ENCODE measurements at regions of chr11 and their contacts with region 1.

Region 1: DNA sequence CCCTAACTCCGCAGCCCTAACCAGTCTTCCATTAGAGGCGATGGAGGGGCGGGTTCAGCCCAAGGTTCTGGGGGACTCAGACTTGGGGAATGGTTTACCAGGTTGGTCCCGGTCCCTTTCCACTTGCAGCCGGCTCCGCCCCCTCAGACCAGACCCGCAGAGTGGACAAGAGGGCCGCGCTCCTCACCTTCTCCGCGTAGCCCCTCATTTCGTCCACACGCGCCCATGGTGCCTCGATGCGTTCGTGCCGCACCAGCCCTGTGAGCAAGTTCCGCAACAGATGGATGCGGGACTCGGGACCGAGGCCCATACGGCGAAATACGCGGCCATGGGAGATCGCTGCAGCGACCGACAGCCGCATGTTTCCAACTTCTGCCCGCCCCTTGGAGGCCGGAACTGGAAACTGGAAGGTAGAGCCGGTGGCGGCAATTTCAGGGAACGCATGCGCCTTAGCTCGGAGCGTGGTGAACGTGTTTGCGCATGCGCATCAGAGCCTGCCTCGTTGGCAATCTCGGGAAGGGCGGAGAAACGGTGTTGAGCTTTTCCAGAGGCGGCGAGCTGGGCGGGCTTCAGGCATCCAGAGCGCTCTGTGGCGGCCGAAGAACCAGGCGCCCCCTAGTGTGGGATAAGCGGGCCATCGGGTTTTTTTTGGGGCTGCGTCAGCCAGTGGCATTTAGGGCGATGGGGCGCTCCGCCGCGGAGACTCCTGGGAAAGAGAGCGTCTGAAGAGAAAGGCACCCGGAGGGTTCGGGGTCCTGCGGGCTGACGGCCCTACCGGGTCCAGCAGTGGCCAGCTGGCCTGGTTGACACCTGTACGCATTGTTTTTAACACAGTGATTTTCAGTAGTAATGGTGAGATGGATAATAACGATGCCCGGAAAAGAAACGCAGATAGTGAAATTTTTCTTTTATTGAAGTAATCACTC is at the start of gene MRPL17:
- DNase-seq: peak; percentile 98
- ATAC-seq: peak; percentile 94
- H3K4me3 ChIP-seq: peak within 1 kb of the TSS; percentile 63 to 81 (median 66)
- H3K27ac ChIP-seq: peak within 1 kb of the TSS; percentile 77
- H3K4me1 ChIP-seq: peaks cover 18% of the 10 kb centered on the region
- H3K27me3 ChIP-seq: peaks cover 0 to 9% of the 10 kb centered on the region in 2 experiments; a peak in 2 of 5 replicates
- CTCF ChIP-seq: peak; percentile 93
- EP300 ChIP-seq: peak; percentile 17 to 27; a peak in 1 of 4 replicates
- POLR2A ChIP-seq: peak; percentile 97 to 98
- RAD21 ChIP-seq: peak; percentile 83
- total RNA-seq, gene MRPL17: 90.0 and 97.9 TPM in 2 replicates

Region 2: DNA sequence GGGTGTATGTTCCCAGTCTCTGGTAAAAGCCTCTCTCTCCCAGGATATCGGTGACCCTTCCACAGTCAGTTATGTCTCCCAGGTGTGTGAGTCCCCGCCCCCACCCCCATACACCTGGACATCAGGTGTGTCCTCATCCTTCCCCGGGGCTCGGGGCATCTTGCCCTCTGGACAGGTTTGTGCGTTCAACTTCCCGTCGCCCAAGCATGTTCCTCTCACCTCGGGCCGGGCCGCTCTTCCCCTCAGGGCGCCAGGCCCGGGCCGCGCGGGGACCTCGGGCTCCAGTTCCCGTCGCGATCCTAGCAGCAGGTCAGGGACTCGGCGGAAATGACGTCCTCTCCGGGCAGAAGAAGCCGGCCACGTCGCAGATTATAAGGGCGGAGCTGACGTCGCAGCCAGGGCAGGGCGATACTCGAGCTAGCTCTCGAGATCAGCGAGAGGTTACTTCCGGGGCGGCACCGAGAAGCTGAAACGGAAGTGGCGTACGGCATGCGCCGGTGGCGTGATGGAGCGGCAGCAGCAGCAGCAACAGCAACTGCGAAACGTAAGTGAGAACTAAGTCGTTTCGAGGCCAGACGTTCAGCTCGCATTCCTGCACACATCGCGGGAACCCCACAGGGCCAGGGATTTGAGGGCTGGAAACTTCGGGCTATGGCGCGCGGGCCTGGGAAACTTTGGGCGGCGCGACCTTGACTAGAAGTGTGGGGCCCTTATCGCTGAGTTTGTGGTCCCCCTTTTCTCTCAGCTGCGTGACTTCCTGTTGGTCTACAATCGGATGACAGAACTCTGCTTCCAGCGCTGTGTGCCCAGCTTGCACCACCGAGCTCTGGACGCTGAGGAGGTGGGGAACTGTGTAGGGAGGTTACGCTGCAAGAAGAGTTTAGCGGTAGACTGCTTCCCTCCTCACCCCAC is 201.9 kb before region 1 on chr11 and contains the starts of genes ARFIP2 and TIMM10B:
- CTCF ChIA-PET with region 1: no interaction called
- POLR2A ChIA-PET with region 1: interaction called, 12 read pairs
- in situ Hi-C with region 1: no loop called
- intact Hi-C with region 1: loop called (anchors 5 kb)
- DNase-seq: peak; percentile 96
- ATAC-seq: peak; percentile 96
- H3K4me3 ChIP-seq: peak within 1 kb of the TSS; percentile 86 to 92 (median 86)
- H3K27ac ChIP-seq: peak within 1 kb of the TSS; percentile 95
- H3K4me1 ChIP-seq: peaks cover 56% of the 10 kb centered on the region
- H3K27me3 ChIP-seq: no peaks in the 10 kb centered on the region; a peak in 1 of 5 replicates
- CTCF ChIP-seq: no peak; the same call in 1 of the 2 replicates
- EP300 ChIP-seq: peak in 1 of 2 experiments; percentile 43; a peak in 1 of 4 replicates
- POLR2A ChIP-seq: peak; percentile 94 to 98
- RAD21 ChIP-seq: 0 out of 2 replicates have a peak, but pooled peaks have one; percentile 9
- total RNA-seq, gene ARFIP2: 58.9 and 60.2 TPM in 2 replicates
- total RNA-seq, gene TIMM10B: 39.5 and 60.1 TPM in 2 replicates

Region 3: DNA sequence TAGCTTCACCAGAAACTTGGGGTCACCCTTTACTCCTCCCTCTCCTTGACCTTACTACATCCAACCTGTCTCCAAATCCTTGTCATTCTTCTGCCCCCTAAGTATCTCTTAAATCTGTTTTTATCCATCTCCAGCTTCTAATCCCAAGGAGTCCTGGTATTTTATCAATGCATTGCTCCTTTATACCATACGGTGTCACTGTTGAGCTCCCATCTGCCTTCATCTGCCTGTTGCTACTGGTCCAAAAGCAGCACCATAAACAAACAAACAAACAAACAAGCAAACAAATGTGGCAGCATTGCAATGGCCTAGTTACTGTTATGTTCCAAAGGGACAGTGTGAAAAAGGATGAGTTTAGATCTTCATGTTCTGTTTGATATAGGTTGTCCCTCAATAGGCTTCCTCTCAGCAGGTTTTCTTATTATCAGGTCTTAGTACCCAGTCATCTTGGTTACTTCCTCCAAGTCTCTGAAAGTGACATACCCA is 151.9 kb before region 1 on chr11:
- CTCF ChIA-PET with region 1: interaction called, 13 read pairs
- POLR2A ChIA-PET with region 1: interaction called, 8 read pairs
- in situ Hi-C with region 1: no loop called
- intact Hi-C with region 1: loop called (anchors 1 kb)
- DNase-seq: peak; percentile 31
- ATAC-seq: peak; percentile 46; the same call in 1 of the 3 replicates
- H3K4me3 ChIP-seq: no peak overlapping the region
- H3K27ac ChIP-seq: no peak overlapping the region
- H3K4me1 ChIP-seq: no peaks in the 10 kb centered on the region
- H3K27me3 ChIP-seq: no peaks in the 10 kb centered on the region
- CTCF ChIP-seq: peak; percentile 83
- EP300 ChIP-seq: no peak
- POLR2A ChIP-seq: no peak
- RAD21 ChIP-seq: peak; percentile 61

Region 4: GRCh38 chr11:6544921-6545850 is 138.0 kb before region 1 on chr11:
- CTCF ChIA-PET with region 1: no interaction called
- POLR2A ChIA-PET with region 1: no interaction called
- in situ Hi-C with region 1: loop called (anchors 5 kb)
- intact Hi-C with region 1: no loop called
- DNase-seq: no peak
- ATAC-seq: no peak; the same call in 2 of the 3 replicates
- H3K4me3 ChIP-seq: no peak overlapping the region
- H3K27ac ChIP-seq: no peak overlapping the region
- H3K4me1 ChIP-seq: no peaks in the 10 kb centered on the region
- H3K27me3 ChIP-seq: no peaks in the 10 kb centered on the region
- CTCF ChIP-seq: no peak
- EP300 ChIP-seq: no peak
- POLR2A ChIP-seq: no peak
- RAD21 ChIP-seq: no peak

Region 5: GRCh38 chr11:6586434-6587359 is 96.5 kb before region 1 on chr11:
- CTCF ChIA-PET with region 1: no interaction called
- POLR2A ChIA-PET with region 1: no interaction called
- in situ Hi-C with region 1: no loop called
- intact Hi-C with region 1: no loop called
- DNase-seq: no peak
- ATAC-seq: no peak; the same call in 1 of the 3 replicates
- H3K4me3 ChIP-seq: no peak overlapping the region
- H3K27ac ChIP-seq: no peak overlapping the region
- H3K4me1 ChIP-seq: no peaks in the 10 kb centered on the region
- H3K27me3 ChIP-seq: no peaks in the 10 kb centered on the region
- CTCF ChIP-seq: no peak
- EP300 ChIP-seq: no peak
- POLR2A ChIP-seq: no peak
- RAD21 ChIP-seq: no peak

Region 6: DNA sequence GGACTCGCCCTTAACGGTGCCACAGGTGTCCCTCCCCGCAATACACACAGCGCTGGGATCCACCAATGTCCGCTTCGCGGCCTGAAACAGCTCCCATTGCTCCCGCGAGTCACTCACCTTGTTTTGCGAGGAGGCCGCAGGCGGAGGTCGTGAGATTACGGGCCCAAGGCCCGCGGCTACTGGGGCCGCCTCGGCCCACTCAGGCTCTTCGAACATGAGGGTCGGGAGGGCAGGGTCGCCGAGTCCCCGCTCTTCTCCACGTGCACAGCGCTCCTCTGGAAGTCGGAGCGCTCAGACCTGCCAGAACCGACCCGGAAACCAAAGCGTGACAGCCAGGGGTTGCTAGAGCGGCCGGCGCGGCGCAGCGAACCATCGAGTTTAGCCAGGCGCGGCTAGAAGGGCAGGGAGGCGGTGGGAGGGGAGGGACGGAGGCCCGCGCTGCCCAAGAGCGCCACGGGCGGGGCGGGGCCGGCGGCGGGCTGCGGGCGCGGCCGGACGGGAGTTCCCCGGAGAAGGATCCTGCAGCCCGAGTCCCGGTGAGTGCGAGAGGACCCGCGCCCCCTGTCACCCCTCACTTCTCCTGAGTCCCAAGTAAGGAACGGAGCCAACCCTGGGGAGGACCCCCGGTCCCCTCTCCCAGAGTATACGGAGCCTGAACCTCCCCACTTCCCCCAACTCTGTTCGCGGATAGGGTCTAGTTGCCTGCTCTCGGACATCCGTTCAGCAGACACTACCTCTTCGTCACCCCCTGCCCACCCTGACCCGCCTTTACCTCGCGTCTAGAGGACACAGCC is 79.7 kb before region 1 on chr11 and contains the starts of genes ILK and RRP8:
- CTCF ChIA-PET with region 1: interaction called, 3 read pairs
- POLR2A ChIA-PET with region 1: interaction called, 13 read pairs
- in situ Hi-C with region 1: no loop called
- intact Hi-C with region 1: no loop called
- DNase-seq: peak; percentile 79
- ATAC-seq: peak; percentile 83
- H3K4me3 ChIP-seq: peak within 1 kb of the TSS; percentile 86 to 97 (median 89)
- H3K27ac ChIP-seq: peak within 1 kb of the TSS; percentile 83
- H3K4me1 ChIP-seq: peaks cover 69% of the 10 kb centered on the region
- H3K27me3 ChIP-seq: no peaks in the 10 kb centered on the region; a peak in 1 of 5 replicates
- CTCF ChIP-seq: peak; percentile 56
- EP300 ChIP-seq: no peak; a peak in 1 of 4 replicates
- POLR2A ChIP-seq: peak; percentile 64 to 82
- RAD21 ChIP-seq: peak; percentile 54
- total RNA-seq, gene ILK: 70.3 and 78.1 TPM in 2 replicates
- total RNA-seq, gene RRP8: 21.6 and 29.1 TPM in 2 replicates

Region 7: GRCh38 chr11:6612213-6613041 is 70.8 kb before region 1 on chr11 and contains the start of gene TAF10:
- CTCF ChIA-PET with region 1: no interaction called
- POLR2A ChIA-PET with region 1: interaction called, 14 read pairs
- in situ Hi-C with region 1: no loop called
- intact Hi-C with region 1: loop called (anchors 1 kb)
- DNase-seq: peak; percentile 87
- ATAC-seq: peak; percentile 92
- H3K4me3 ChIP-seq: peak within 1 kb of the TSS; percentile 81 to 93 (median 86)
- H3K27ac ChIP-seq: peak within 1 kb of the TSS; percentile 93
- H3K4me1 ChIP-seq: peaks cover 36% of the 10 kb centered on the region
- H3K27me3 ChIP-seq: no peaks in the 10 kb centered on the region
- CTCF ChIP-seq: peak; percentile 70
- EP300 ChIP-seq: no peak
- POLR2A ChIP-seq: peak; percentile 85 to 99
- RAD21 ChIP-seq: no peak
- total RNA-seq, gene TAF10: 51.0 and 71.3 TPM in 2 replicates

Region 8: DNA sequence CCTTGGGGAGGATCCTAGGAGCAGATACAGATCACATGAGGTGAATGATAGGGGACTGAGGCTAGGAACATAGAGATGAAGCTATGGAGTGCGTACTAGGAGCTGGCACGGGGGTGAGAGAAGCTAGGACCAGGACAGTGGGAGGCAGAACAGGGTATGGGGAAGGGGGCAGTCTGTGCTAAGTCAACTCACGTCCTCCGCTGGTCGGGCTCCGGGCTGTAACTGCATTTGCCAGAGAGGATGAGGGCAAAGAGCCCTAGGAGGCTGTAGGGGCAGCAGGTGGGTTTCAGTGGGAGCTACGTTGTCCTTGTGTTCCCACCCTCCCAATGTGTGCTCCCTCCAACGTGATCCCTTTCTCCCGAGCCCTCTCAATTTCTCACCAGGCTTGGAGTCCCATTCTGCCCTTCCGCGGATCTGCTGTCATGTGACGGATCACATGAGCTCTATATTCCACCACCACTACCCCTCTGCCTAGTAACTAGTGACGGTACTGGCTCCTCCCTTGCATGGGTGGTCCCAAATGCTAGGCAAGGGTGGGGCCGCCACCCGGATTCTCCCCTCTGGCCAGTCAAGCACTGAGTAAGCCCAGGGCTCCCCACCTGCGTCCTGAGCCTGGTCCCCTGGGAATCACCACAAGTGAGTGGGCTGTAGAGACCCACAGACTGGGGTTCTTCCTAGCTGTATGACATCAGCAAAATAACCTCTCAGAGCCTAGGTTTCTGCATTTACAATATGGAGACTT is 64.0 kb before region 1 on chr11 and contains the start of gene TPP1:
- CTCF ChIA-PET with region 1: no interaction called
- POLR2A ChIA-PET with region 1: interaction called, 20 read pairs
- in situ Hi-C with region 1: no loop called
- intact Hi-C with region 1: no loop called
- DNase-seq: peak; percentile 91
- ATAC-seq: peak; percentile 93
- H3K4me3 ChIP-seq: peak within 1 kb of the TSS; percentile 67 to 94 (median 88)
- H3K27ac ChIP-seq: peak within 1 kb of the TSS; percentile 58
- H3K4me1 ChIP-seq: peaks cover 28% of the 10 kb centered on the region
- H3K27me3 ChIP-seq: peaks cover 12 to 40% of the 10 kb centered on the region in 2 experiments; a peak in 4 of 5 replicates
- CTCF ChIP-seq: peak; percentile 18; the same call in 1 of the 2 replicates
- EP300 ChIP-seq: peak in 1 of 2 experiments; percentile 50; a peak in 1 of 4 replicates
- POLR2A ChIP-seq: peak; percentile 81 to 88
- RAD21 ChIP-seq: no peak
- total RNA-seq, gene TPP1: 13.9 and 14.4 TPM in 2 replicates

Region 9: DNA sequence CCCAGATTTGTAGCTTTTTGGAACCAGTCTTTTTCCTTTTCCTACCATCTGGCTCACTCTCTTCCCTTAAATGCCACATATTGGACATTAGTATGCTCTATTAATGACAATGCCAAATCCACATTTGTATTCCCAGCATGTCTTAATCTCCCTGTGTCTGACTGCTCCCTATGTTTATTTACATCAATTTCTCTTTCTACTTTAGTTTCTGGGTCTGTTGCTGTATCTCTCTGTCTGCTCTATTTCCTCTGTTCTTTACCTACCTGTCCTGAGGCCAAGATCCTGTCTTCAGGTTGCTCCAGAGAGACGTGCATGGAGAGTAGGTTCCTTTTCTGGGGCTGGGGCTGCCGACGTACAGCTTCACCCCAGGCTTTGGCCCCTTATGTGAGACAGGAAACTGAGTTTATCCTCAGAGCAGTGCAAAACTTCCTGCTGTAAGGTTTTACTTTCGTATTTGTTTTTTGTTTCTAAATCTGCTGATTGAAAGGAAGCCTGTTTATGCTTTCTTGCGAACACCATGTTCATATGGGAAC is 63.0 kb after region 1 on chr11:
- CTCF ChIA-PET with region 1: no interaction called
- POLR2A ChIA-PET with region 1: no interaction called
- in situ Hi-C with region 1: no loop called
- intact Hi-C with region 1: no loop called
- DNase-seq: no peak
- ATAC-seq: no peak
- H3K4me3 ChIP-seq: no peak overlapping the region
- H3K27ac ChIP-seq: no peak overlapping the region
- H3K4me1 ChIP-seq: no peaks in the 10 kb centered on the region
- H3K27me3 ChIP-seq: peaks cover 0 to 12% of the 10 kb centered on the region in 2 experiments; a peak in 2 of 5 replicates
- CTCF ChIP-seq: no peak
- EP300 ChIP-seq: no peak
- POLR2A ChIP-seq: no peak
- RAD21 ChIP-seq: no peak

Measured in HepG2 (cell line).